CD4-positive, alpha-beta memory T cell (primary cell): ENCODE measurements at regions of chrX and their contacts with region 1.

Region 1: GRCh38 chrX:13688958-13689740 is at the start of gene RAB9A:
- DNase-seq: peak; percentile 77 to 83 (median 80)
- H3K4me3 ChIP-seq: peak within 1 kb of the TSS; percentile 52
- H3K4me3 Mint-ChIP-seq: peak within 1 kb of the TSS; percentile 89 to 96 (median 93)
- H3K27ac ChIP-seq: peak within 1 kb of the TSS; percentile 87
- H3K27ac Mint-ChIP-seq: peak within 1 kb of the TSS; percentile 94 to 97 (median 96)
- H3K4me1 ChIP-seq: peaks cover 48% of the 10 kb centered on the region
- H3K4me1 Mint-ChIP-seq: peaks cover 32 to 77% (median 54%) of the 10 kb centered on the region in 4 donors
- H3K27me3 ChIP-seq: no peaks in the 10 kb centered on the region
- H3K27me3 Mint-ChIP-seq: no peaks in the 10 kb centered on the region
- total RNA-seq, gene RAB9A: 19.9 to 22.7 TPM

Region 2: GRCh38 chrX:13653022-13653693 is 36.0 kb before region 1 on chrX and contains the start of gene TCEANC:
- CTCF ChIA-PET with region 1: no interaction called
- POLR2A ChIA-PET with region 1: interaction called, 19 read pairs
- intact Hi-C with region 1: loop called (anchors 2 kb)
- DNase-seq: peak; percentile 95 to 97 (median 96)
- H3K4me3 ChIP-seq: peak within 1 kb of the TSS; percentile 47 to 75
- H3K4me3 Mint-ChIP-seq: peak within 1 kb of the TSS; percentile 91 to 97 (median 96)
- H3K27ac ChIP-seq: peak within 1 kb of the TSS; percentile 94
- H3K27ac Mint-ChIP-seq: peak within 1 kb of the TSS; percentile 96 to 99 (median 99)
- H3K4me1 ChIP-seq: peaks cover 22% of the 10 kb centered on the region
- H3K4me1 Mint-ChIP-seq: peaks cover 11 to 33% (median 18%) of the 10 kb centered on the region in 4 donors
- H3K27me3 ChIP-seq: no peaks in the 10 kb centered on the region
- H3K27me3 Mint-ChIP-seq: no peaks in the 10 kb centered on the region
- total RNA-seq, gene TCEANC: 14.6 to 16.3 TPM

Region 3: GRCh38 chrX:13658602-13659001 is 30.5 kb before region 1 on chrX:
- CTCF ChIA-PET with region 1: interaction called, 6 read pairs
- POLR2A ChIA-PET with region 1: interaction called, 19 read pairs
- intact Hi-C with region 1: loop called (anchors 2 kb)
- DNase-seq: peak in 4 of 5 donors; percentile 59 to 69 (median 64)
- H3K4me3 ChIP-seq: no peak overlapping the region
- H3K4me3 Mint-ChIP-seq: peak overlapping the region in 3 of 8 donors; percentile 0 to 59 (median 5)
- H3K27ac ChIP-seq: no peak overlapping the region
- H3K27ac Mint-ChIP-seq: peak overlapping the region; percentile 56 to 85 (median 76)
- H3K4me1 ChIP-seq: peaks cover 27% of the 10 kb centered on the region
- H3K4me1 Mint-ChIP-seq: peaks cover 19 to 26% (median 22%) of the 10 kb centered on the region in 4 donors
- H3K27me3 ChIP-seq: no peaks in the 10 kb centered on the region
- H3K27me3 Mint-ChIP-seq: no peaks in the 10 kb centered on the region

Region 4: GRCh38 chrX:13721819-13722519 is 32.8 kb after region 1 on chrX:
- CTCF ChIA-PET with region 1: interaction called, 3 read pairs
- POLR2A ChIA-PET with region 1: interaction called, 16 read pairs
- intact Hi-C with region 1: no loop called
- DNase-seq: no peak
- H3K4me3 ChIP-seq: no peak overlapping the region
- H3K4me3 Mint-ChIP-seq: no peak overlapping the region
- H3K27ac ChIP-seq: no peak overlapping the region
- H3K27ac Mint-ChIP-seq: peak overlapping the region; percentile 30 to 75 (median 59)
- H3K4me1 ChIP-seq: peaks cover 54% of the 10 kb centered on the region
- H3K4me1 Mint-ChIP-seq: peaks cover 31 to 88% (median 60%) of the 10 kb centered on the region in 4 donors
- H3K27me3 ChIP-seq: no peaks in the 10 kb centered on the region
- H3K27me3 Mint-ChIP-seq: no peaks in the 10 kb centered on the region